ENCODE measurements at regions of chr14 and their contacts with region 1.

Region 1: DNA sequence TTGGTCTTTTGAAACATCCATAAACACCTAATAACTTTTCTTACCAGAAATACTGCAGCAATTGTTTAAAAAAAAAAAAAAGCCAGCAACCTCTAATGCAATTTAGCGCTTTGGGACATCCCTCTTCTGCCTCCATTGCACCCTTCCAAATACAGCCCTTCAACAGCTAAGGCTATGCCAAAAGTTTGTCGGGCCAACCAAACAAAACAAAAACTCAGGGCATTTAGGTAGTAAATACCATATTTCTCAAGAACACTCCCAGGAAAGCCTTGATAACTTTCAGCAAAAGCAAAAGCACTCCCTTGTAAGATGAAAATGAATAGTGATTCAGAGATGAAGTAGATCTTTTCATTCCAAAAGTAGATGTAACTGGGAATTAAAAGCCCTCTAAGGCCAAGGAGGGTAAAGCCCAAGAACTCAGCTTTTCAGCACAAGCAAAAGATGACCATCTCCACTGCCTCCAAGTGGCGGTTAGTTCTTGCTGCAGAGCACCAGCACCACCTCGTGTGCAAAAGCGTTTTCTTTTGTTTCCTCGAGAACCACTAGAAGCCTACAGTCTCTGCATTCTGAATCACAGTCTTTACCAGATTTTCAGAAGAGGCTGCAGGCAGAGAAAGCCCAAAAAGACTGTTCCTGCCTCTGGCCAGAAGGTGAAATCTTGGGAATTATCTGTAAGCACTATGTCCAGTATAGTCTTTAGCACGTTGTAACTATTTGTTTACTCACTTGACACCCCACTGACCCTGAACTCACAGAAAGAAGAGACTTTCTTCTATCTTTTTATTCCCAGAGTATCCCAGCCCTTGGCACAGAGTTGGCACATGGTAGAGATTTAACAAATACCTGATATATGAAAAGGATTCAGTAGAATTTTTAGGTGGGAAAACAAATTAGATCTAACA is 53.1 kb downstream of the SIX6 start:
- DNase-seq: peak; percentile 62 to 69
- H3K4me3 ChIP-seq: no peak overlapping the region
- H3K4me1 ChIP-seq: no peaks in the 10 kb centered on the region
- H3K27me3 ChIP-seq: no peaks in the 10 kb centered on the region; the same call in 1 of the 2 replicates

Region 2: DNA sequence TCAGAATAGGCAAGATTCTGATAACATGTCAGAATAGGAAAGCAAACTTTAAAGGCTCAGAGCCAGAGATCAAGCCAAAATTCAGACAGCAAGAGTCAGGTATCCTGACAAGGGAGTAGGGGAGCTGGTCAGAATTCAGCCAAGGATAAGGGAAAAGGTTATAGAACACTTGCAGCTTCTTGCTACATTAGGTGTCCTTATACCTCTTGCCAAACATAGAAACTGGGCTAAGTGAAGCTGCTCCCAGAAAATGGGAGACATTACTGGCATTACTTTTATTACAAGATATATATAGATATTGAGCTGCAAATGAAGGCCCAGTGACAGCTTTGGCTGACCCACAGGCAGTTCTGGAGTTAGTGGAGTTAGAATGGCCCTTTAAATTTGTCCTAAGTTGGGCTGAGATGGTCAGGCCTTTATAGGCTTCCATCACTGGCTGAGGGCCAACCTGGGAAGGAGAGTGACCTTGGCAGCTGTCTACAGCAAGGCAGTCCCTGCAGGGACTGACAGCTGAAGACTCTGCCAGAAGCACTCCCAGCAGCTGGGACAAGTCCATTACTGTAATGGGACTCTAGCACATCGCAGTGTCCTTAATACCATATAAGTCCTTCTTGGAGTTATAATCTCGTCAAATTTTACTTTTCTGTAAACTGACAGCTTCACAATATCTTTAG is 559.1 kb before region 1 on chr14:
- in situ Hi-C with region 1: no loop called
- DNase-seq: peak in 1 of 2 experiments; percentile 8
- H3K4me3 ChIP-seq: no peak overlapping the region
- H3K4me1 ChIP-seq: no peaks in the 10 kb centered on the region
- H3K27me3 ChIP-seq: peaks cover 6% of the 10 kb centered on the region; the same call in 1 of the 2 replicates

Region 3: GRCh38 chr14:60184146-60184904 is 377.8 kb before region 1 on chr14:
- in situ Hi-C with region 1: loop called (anchors 10 kb)
- DNase-seq: peak; percentile 51 to 69
- H3K4me3 ChIP-seq: no peak overlapping the region
- H3K4me1 ChIP-seq: 0 out of 2 replicates have a peak, but pooled peaks cover 4% of the 10 kb centered on the region
- H3K27me3 ChIP-seq: no peaks in the 10 kb centered on the region

Region 4: DNA sequence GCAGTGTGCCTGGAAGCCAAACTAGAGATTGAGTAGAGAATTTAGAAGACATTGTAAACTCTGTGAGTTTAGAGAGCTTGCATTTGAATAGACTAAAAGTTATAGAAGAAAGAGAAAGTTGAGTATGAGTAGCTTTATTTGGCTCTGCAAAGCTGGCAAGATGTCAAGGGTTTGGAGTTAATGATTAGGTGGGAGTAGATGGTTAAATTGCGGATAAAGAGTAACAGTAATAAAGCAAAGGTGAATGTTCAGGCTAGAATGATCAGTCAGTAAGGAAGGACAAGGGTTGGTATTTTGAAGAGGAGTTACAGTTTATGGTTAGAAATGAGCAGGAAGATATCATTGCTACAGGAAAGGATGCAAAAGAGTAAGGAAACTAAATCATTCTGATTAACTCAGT is 307.9 kb before region 1 on chr14:
- in situ Hi-C with region 1: no loop called
- DNase-seq: peak; percentile 19 to 32
- H3K4me3 ChIP-seq: no peak overlapping the region
- H3K4me1 ChIP-seq: peaks cover 50% of the 10 kb centered on the region
- H3K27me3 ChIP-seq: no peaks in the 10 kb centered on the region

Region 5: DNA sequence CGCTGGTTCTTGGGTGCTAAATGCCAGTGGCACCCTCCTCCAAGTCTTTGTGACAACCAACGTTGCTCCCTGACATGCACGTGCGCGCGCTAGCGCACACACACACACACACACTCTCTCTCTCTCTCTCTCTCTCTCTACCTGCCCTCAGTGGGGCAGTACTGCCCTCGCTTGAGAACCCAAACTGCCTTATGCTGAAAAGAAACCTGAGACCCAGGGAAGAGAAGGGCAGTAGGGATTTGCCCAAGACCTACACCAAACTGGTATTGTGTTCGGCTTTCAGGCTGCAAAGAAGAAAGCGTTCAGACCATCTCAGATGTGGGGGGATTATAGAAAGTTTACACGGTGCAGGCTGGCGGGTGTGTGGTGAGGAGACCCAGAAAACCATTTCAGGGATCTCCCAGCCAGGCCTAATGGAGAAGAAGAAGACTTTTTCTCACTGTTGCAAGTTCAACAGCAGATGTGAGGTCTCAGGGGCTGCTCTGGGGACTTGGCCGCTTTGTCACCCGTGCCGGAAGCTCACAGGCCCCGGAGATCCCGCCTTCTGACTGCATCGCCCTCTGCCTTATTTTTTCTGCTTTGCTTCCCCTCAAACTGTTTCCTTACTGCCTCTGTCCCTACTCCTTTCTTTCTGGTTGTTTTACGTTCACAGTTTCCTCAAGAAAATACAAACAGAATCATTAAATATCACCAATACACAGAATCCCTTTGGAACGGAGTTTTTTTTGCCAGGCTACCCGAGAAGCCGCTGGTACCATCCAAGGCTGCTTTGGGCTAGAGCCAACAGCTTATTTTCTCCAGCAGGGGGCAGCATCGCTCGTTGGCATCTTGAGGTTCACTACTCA is 230.7 kb before region 1 on chr14:
- in situ Hi-C with region 1: loop called (anchors 25 kb)
- DNase-seq: peak; percentile 51 to 89
- H3K4me3 ChIP-seq: no peak overlapping the region
- H3K4me1 ChIP-seq: no peaks in the 10 kb centered on the region
- H3K27me3 ChIP-seq: no peaks in the 10 kb centered on the region; the same call in 1 of the 2 replicates

Region 6: DNA sequence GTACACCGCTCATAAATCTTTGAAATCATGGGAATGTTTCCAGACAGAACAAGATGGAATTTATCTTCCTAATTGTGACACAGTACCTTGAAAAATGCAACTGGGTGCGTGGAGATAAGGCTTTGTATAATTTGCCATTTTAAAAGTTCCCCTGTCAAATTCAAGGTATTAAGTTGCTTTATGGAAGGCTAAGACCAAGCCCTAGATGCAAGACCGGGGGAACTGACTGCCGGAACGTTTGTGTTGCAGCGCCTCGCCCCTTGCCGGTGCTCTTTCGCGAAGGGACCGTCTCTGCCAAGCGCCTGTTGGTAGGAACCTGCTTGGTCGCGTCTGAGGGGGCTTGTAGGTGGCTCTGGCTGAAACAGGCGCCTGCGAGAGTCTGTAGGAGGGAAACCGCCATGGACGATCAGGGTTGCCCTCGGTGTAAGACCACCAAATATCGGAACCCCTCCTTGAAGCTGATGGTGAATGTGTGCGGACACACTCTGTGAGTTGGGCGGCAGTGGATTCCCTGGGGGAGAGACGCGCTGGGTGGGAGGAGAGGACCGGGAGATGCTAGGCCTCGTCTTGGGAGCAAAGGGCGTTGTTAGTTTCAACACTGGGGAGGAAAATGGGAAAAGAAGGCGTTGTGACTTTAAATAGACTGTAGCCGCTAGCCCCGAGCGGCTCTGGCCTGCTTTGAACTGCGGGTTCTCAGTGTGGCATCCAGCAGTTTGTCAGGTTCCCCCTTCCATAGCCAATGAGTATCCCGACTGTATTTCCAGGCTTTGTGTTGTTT is 172.6 kb after region 1 on chr14 and contains the start of gene MNAT1:
- in situ Hi-C with region 1: no loop called
- DNase-seq: peak; percentile 82 to 87
- H3K4me3 ChIP-seq: peak within 1 kb of the TSS; percentile 73
- H3K4me1 ChIP-seq: peaks cover 8% of the 10 kb centered on the region; the same call in 1 of the 2 replicates
- H3K27me3 ChIP-seq: no peaks in the 10 kb centered on the region

Region 7: DNA sequence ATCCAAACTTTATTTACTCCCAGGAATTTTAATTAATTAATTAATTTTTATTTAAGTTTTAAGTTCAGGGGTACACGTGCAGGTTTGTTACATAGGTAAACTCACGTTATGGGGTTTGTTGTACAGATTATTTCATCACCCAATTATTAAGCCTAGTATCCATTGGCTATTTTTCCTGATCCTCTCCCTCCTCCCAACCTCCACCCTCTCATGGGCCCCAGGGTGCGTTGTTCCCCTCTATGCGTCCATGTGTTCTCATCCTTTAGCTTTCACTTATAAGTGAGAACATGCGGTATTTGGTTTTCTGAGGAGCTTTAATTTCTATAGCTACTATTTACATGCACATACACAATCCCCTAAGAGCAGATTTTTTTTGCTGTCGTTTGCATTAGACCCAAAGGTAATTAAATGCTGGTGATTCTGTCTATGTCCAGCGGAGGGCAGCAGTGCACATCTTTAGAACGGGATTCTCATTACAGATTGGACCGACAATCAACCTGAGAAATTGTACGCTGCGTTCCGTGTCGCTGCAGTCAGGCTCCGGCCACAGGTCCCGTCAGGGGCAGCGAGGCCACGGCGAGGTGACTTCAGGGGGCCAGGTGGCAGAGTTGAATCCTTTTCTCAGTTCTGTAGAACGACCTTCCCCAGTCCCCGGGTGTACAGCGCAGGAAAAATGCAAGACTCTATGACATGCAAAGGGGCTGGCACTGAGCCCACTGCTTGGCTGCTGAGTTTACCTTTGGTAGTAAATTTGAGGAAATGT is 707.4 kb after region 1 on chr14:
- in situ Hi-C with region 1: no loop called
- DNase-seq: peak; percentile 80 to 82
- H3K4me3 ChIP-seq: peak overlapping the region; percentile 18
- H3K4me1 ChIP-seq: peaks cover 2% of the 10 kb centered on the region; the same call in 1 of the 2 replicates
- H3K27me3 ChIP-seq: peaks cover 12% of the 10 kb centered on the region